PC-9 (cell line): ENCODE measurements at regions of chr2 and their contacts with region 1.

Region 1: GRCh38 chr2:159615140-159615951 is 1.0 kb downstream of the BAZ2B start:
- DNase-seq: peak; percentile 57 to 75
- H3K4me3 ChIP-seq: peak overlapping the region; percentile 71
- H3K27ac ChIP-seq: peak overlapping the region; percentile 92
- H3K4me1 ChIP-seq: peaks cover 19% of the 10 kb centered on the region
- H3K27me3 ChIP-seq: no peaks in the 10 kb centered on the region
- CTCF ChIP-seq: no peak

Region 2: GRCh38 chr2:159256159-159256558 is 359.2 kb before region 1 on chr2:
- CTCF ChIA-PET with region 1: no interaction called
- POLR2A ChIA-PET with region 1: no interaction called
- intact Hi-C with region 1: no loop called
- DNase-seq: no peak
- H3K4me3 ChIP-seq: no peak overlapping the region
- H3K27ac ChIP-seq: no peak overlapping the region
- H3K4me1 ChIP-seq: no peaks in the 10 kb centered on the region
- H3K27me3 ChIP-seq: no peaks in the 10 kb centered on the region
- CTCF ChIP-seq: no peak

Region 3: DNA sequence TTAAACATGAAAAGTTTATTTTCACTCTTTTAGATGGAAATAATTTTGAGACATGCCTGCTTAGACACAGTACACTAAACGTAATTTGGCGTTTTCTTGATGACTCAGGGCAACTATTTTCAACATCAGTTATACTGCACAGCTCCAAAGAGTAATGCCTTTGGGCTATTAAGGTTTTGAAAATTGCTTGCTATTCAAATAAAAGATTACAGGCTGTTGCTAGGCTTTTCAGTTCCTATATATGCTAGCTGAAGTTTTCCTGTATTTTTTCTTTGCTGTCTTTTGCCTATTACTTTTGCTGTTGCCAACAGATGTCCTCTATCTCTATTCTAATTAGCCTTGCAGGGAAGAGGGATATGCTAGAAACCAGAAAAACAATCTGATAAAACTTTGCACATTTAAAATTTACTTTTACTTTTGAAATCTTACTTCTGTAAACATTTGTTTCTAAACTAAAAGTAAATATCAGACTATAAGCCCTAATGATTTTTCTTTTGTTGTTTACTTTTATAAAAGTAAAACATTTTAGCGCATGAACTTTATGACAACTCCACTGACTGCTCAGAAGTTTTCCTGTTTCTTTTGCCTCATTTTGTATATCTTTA is 215.4 kb before region 1 on chr2:
- CTCF ChIA-PET with region 1: no interaction called
- POLR2A ChIA-PET with region 1: interaction called, 19 read pairs
- intact Hi-C with region 1: no loop called
- DNase-seq: no peak
- H3K4me3 ChIP-seq: no peak overlapping the region
- H3K27ac ChIP-seq: no peak overlapping the region
- H3K4me1 ChIP-seq: no peaks in the 10 kb centered on the region; the same call in 1 of the 2 replicates
- H3K27me3 ChIP-seq: no peaks in the 10 kb centered on the region
- CTCF ChIP-seq: no peak

Region 4: GRCh38 chr2:159410276-159410675 is 205.1 kb before region 1 on chr2:
- CTCF ChIA-PET with region 1: no interaction called
- POLR2A ChIA-PET with region 1: no interaction called
- intact Hi-C with region 1: no loop called
- DNase-seq: no peak
- H3K4me3 ChIP-seq: no peak overlapping the region
- H3K27ac ChIP-seq: no peak overlapping the region
- H3K4me1 ChIP-seq: no peaks in the 10 kb centered on the region
- H3K27me3 ChIP-seq: no peaks in the 10 kb centered on the region
- CTCF ChIP-seq: no peak

Region 5: DNA sequence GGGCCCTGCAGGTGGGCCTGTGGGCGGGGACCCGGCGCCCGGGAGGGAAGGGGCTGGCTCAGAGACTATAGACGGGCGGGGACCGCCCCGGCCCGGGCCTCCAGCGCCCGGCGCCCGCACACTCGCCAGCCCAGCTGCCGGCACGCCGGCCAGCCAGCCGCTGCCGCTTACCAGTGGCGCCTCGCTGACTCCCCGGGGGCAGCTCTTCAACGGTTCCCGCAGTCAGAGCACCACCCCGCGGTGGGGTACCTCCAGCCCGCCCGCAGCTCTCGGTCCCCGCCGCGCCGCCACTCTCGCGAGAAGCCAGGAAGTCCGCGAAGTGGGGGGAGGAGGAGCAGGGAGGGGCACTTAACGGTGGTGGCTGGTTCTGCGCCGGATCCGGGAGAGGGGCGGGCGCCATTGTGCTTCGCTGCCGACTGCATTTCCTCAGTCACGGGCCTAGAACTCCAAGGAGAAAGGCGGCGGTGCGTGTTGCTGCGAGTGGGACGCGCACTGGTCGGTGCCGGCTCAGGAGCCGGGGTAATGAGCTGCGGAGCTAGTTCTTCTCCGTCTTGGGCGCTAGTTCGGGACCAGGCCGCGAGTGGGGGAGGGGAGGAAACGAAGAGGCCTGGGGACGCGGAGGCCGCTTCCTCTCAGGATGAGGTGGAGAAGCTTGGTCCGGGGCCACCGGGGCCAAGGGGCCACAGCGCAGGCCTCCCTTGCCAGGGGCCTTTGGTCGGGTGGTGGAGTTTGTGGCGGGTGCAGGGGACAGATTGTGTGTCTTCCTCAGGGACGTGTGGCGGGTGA is 97.0 kb after region 1 on chr2 and contains the start of gene MARCHF7:
- CTCF ChIA-PET with region 1: no interaction called
- POLR2A ChIA-PET with region 1: no interaction called
- intact Hi-C with region 1: loop called (anchors 1 kb)
- DNase-seq: peak; percentile 79 to 94
- H3K4me3 ChIP-seq: peak within 1 kb of the TSS; percentile 97
- H3K27ac ChIP-seq: peak within 1 kb of the TSS; percentile 78
- H3K4me1 ChIP-seq: peaks cover 37% of the 10 kb centered on the region
- H3K27me3 ChIP-seq: no peaks in the 10 kb centered on the region
- CTCF ChIP-seq: peak; percentile 32; the same call in 1 of the 2 replicates
- total RNA-seq, gene MARCHF7: 33.2 and 38.3 TPM in 2 replicates